GM12878 (cell line): ENCODE measurements at regions of chr3 and their contacts with region 1.

Region 1: GRCh38 chr3:165837058-165837525 is at the start of gene BCHE:
- DNase-seq: no peak
- ATAC-seq: peak; percentile 52
- H3K4me3 ChIP-seq: no peak within 1 kb of the TSS
- H3K27ac ChIP-seq: no peak within 1 kb of the TSS
- H3K4me1 ChIP-seq: no peaks in the 10 kb centered on the region
- H3K27me3 ChIP-seq: no peaks in the 10 kb centered on the region
- CTCF ChIP-seq: no peak
- EP300 ChIP-seq: no peak
- POLR2A ChIP-seq: no peak
- RAD21 ChIP-seq: no peak
- polyA plus RNA-seq, gene BCHE: 36.0 to 54.5 TPM

Region 2: DNA sequence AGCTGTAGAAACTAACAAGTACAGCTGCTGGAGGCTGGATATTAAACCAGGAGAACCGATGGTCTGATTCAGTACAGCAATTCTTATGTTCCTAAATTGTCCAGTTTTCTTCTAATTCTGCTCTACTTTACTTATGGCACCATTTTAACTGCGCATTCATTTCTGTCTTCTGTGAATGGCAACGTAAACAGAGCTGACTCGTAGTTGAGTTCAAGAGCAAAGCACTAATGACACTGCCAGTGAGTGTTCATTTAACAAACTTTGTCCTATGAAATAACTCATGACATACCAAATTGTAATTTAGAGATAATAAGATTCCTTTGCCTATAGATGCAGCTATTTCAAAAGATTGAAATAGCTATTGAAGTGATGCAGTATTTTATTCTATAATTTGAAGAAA is 48.6 kb before region 1 on chr3:
- CTCF ChIA-PET with region 1: no interaction called
- POLR2A ChIA-PET with region 1: interaction called, 6 read pairs
- RAD21 ChIA-PET with region 1: interaction called, 20 read pairs
- SMC1A ChIA-PET with region 1: interaction called, 5 read pairs
- in situ Hi-C with region 1: no loop called
- intact Hi-C with region 1: no loop called
- DNase-seq: no peak
- ATAC-seq: peak; percentile 67
- H3K4me3 ChIP-seq: no peak overlapping the region
- H3K27ac ChIP-seq: no peak overlapping the region
- H3K4me1 ChIP-seq: no peaks in the 10 kb centered on the region
- H3K27me3 ChIP-seq: no peaks in the 10 kb centered on the region
- CTCF ChIP-seq: no peak
- EP300 ChIP-seq: no peak
- POLR2A ChIP-seq: no peak
- RAD21 ChIP-seq: no peak

Region 3: DNA sequence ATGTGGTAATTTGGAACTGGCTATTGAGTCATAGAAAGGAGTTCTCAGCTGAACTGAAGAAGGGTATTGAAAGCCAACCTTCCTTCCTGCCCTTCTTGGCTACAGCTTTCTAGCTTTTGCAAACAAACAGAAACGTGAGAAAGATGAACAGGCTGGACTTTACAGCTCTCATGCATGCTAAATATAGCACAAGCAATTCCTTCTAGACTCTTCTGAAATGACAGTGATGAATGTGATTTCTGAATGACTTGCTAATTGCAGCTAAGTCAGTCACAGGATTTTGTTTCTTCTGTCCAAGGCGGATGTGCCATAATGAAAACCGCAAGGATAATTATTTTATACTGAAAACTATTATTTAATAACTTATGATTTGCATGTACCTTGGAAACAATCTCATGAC is 36.1 kb before region 1 on chr3:
- CTCF ChIA-PET with region 1: interaction called, 3 read pairs
- POLR2A ChIA-PET with region 1: interaction called, 4 read pairs
- RAD21 ChIA-PET with region 1: interaction called, 8 read pairs
- SMC1A ChIA-PET with region 1: interaction called, 13 read pairs
- in situ Hi-C with region 1: no loop called
- intact Hi-C with region 1: no loop called
- DNase-seq: no peak
- ATAC-seq: peak; percentile 63
- H3K4me3 ChIP-seq: no peak overlapping the region
- H3K27ac ChIP-seq: no peak overlapping the region
- H3K4me1 ChIP-seq: no peaks in the 10 kb centered on the region
- H3K27me3 ChIP-seq: no peaks in the 10 kb centered on the region
- CTCF ChIP-seq: no peak
- EP300 ChIP-seq: no peak
- POLR2A ChIP-seq: no peak
- RAD21 ChIP-seq: no peak

Region 4: DNA sequence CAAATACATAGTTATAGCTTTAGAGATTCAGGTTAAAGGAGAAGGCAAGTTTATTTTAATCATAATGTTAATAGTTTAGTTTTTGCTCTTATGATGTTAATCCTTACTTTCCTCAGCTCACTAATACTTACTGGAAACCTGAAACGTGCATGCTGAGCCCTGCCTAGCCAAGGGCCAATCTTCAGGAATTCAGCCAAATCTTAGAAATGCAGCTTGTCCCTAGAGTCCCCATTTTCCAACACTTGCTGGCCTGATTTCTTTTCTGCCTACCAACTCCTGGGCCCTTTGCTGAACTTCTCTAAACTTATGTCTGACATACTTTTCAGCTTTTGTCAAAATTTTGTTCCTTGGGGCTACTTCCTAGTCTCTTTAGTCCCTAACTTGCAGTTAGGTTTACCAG is 22.7 kb before region 1 on chr3:
- CTCF ChIA-PET with region 1: interaction called, 3 read pairs
- POLR2A ChIA-PET with region 1: interaction called, 6 read pairs
- RAD21 ChIA-PET with region 1: interaction called, 98 read pairs
- SMC1A ChIA-PET with region 1: interaction called, 17 read pairs
- in situ Hi-C with region 1: no loop called
- intact Hi-C with region 1: no loop called
- DNase-seq: no peak
- ATAC-seq: no peak
- H3K4me3 ChIP-seq: no peak overlapping the region
- H3K27ac ChIP-seq: no peak overlapping the region
- H3K4me1 ChIP-seq: no peaks in the 10 kb centered on the region
- H3K27me3 ChIP-seq: no peaks in the 10 kb centered on the region
- CTCF ChIP-seq: no peak
- EP300 ChIP-seq: no peak
- POLR2A ChIP-seq: no peak
- RAD21 ChIP-seq: no peak

Region 5: GRCh38 chr3:165820671-165821123 is 16.4 kb before region 1 on chr3:
- CTCF ChIA-PET with region 1: interaction called, 6 read pairs
- POLR2A ChIA-PET with region 1: interaction called, 11 read pairs
- RAD21 ChIA-PET with region 1: interaction called, 98 read pairs
- SMC1A ChIA-PET with region 1: interaction called, 55 read pairs
- in situ Hi-C with region 1: no loop called
- intact Hi-C with region 1: no loop called
- DNase-seq: no peak
- ATAC-seq: peak; percentile 44
- H3K4me3 ChIP-seq: no peak overlapping the region
- H3K27ac ChIP-seq: no peak overlapping the region
- H3K4me1 ChIP-seq: no peaks in the 10 kb centered on the region
- H3K27me3 ChIP-seq: no peaks in the 10 kb centered on the region
- CTCF ChIP-seq: no peak
- EP300 ChIP-seq: peak; percentile 60 to 64; a peak in 2 of 4 replicates
- POLR2A ChIP-seq: no peak
- RAD21 ChIP-seq: no peak

Region 6: GRCh38 chr3:165854696-165855095 is 17.6 kb after region 1 on chr3:
- CTCF ChIA-PET with region 1: interaction called, 13 read pairs
- POLR2A ChIA-PET with region 1: no interaction called
- RAD21 ChIA-PET with region 1: interaction called, 5 read pairs
- SMC1A ChIA-PET with region 1: interaction called, 3 read pairs
- in situ Hi-C with region 1: no loop called
- intact Hi-C with region 1: no loop called
- DNase-seq: no peak
- ATAC-seq: peak; percentile 48
- H3K4me3 ChIP-seq: no peak overlapping the region
- H3K27ac ChIP-seq: no peak overlapping the region
- H3K4me1 ChIP-seq: no peaks in the 10 kb centered on the region
- H3K27me3 ChIP-seq: no peaks in the 10 kb centered on the region
- CTCF ChIP-seq: peak; percentile 35 to 50 (median 48); a peak in 4 of 6 replicates
- EP300 ChIP-seq: no peak
- POLR2A ChIP-seq: no peak
- RAD21 ChIP-seq: 0 out of 2 replicates have a peak, but pooled peaks have one; percentile 20